GM12878 (cell line): ENCODE measurements at regions of chrX and their contacts with region 1.

Region 1: GRCh38 chrX:66015152-66015831 is 24.6 kb downstream of the VSIG4 start:
- DNase-seq: peak; percentile 68
- ATAC-seq: peak; percentile 40
- H3K4me3 ChIP-seq: peak overlapping the region; percentile 11; the same call in 1 of the 2 replicates
- H3K27ac ChIP-seq: peak overlapping the region; percentile 87
- H3K4me1 ChIP-seq: peaks cover 66% of the 10 kb centered on the region
- H3K27me3 ChIP-seq: no peaks in the 10 kb centered on the region
- CTCF ChIP-seq: no peak
- EP300 ChIP-seq: no peak
- POLR2A ChIP-seq: 0 out of 2 replicates have a peak, but pooled peaks have one; percentile 31
- RAD21 ChIP-seq: no peak

Region 2: DNA sequence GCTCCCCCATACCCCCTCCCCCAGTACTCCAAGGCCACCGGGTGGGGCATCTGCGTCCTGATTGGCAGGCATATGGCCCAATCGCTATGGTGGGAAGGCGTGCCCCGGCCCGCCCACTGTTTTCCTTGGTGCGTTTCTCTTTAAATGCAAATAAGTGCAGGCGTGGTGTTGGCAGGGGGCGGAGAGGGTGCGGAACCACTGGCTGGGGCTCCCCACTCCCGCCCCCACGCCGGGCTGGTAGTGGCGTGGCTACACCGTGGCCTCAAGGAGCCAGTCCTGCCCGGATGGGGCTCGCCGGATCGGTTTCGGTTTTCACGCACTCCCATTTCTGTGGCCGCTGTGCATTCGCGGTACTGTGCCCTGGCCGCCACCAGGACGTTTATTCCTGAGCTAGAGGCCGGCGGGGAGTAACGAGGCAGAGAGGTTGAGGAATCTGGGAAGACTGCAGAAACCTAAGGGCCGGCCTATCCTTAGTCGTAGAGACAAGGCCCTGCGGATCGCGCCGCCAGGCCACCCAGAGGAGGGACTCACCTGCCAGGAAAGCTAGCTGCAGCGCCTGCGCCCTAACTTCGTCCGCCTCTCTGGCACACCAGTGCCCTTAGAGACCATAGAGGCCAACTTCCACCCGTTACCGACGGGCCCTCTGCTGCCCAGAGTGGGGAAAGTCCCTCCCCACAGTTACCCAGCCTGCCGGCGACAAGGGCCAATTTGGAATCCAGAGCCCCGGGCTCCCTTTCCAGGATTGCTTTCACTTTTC is 1809.4 kb before region 1 on chrX:
- CTCF ChIA-PET with region 1: no interaction called
- POLR2A ChIA-PET with region 1: no interaction called
- RAD21 ChIA-PET with region 1: no interaction called
- SMC1A ChIA-PET with region 1: no interaction called
- in situ Hi-C with region 1: loop called (anchors 25 kb)
- intact Hi-C with region 1: no loop called
- DNase-seq: peak; percentile 71
- ATAC-seq: peak; percentile 89
- H3K4me3 ChIP-seq: peak overlapping the region; percentile 62
- H3K27ac ChIP-seq: peak overlapping the region; percentile 84
- H3K4me1 ChIP-seq: no peaks in the 10 kb centered on the region; the same call in 1 of the 2 replicates
- H3K27me3 ChIP-seq: no peaks in the 10 kb centered on the region
- CTCF ChIP-seq: no peak
- EP300 ChIP-seq: no peak
- POLR2A ChIP-seq: peak; percentile 92
- RAD21 ChIP-seq: no peak

Region 3: GRCh38 chrX:65783746-65784145 is 231.5 kb before region 1 on chrX:
- CTCF ChIA-PET with region 1: no interaction called
- POLR2A ChIA-PET with region 1: no interaction called
- RAD21 ChIA-PET with region 1: no interaction called
- SMC1A ChIA-PET with region 1: no interaction called
- in situ Hi-C with region 1: no loop called
- intact Hi-C with region 1: no loop called
- DNase-seq: no peak
- ATAC-seq: no peak
- H3K4me3 ChIP-seq: no peak overlapping the region
- H3K27ac ChIP-seq: no peak overlapping the region
- H3K4me1 ChIP-seq: no peaks in the 10 kb centered on the region
- H3K27me3 ChIP-seq: no peaks in the 10 kb centered on the region
- CTCF ChIP-seq: no peak
- EP300 ChIP-seq: no peak
- POLR2A ChIP-seq: no peak
- RAD21 ChIP-seq: no peak

Region 4: DNA sequence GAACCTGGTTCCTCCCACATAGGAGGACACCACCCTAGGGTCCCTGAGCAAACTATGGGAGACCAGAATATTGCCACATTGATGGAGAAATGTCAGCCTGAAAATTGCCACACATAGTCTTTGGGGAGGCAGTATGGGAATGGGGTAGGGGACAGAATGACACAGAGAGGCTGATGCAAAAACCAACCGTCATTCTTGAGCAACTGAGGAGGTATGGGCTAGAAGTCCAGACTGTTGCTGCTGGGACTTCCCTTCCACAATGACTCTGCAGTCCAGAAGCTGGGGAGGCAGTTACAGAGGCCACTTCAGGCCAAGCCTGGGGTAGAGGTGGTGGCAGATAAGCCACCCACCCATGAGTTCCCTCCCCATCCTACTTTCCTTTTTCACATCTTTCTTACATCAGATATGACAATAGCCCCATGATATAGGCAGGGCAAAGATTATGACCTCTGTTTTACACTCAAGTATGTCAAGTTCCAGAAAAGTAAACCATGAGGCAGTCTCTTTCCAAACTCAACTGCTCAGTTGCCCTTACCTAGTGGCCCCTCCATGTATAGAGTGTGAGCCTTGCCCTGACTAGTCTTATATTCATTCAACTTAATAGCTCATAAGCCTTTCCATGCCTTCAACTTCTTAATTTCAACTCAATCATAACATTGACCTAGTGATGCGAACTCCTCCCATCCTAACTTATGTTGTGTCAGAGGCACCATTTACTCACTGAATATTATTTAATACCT is 17.1 kb before region 1 on chrX:
- CTCF ChIA-PET with region 1: interaction called, 4 read pairs
- POLR2A ChIA-PET with region 1: interaction called, 4 read pairs
- RAD21 ChIA-PET with region 1: interaction called, 14 read pairs
- SMC1A ChIA-PET with region 1: interaction called, 12 read pairs
- in situ Hi-C with region 1: no loop called
- intact Hi-C with region 1: no loop called
- DNase-seq: no peak
- ATAC-seq: no peak
- H3K4me3 ChIP-seq: no peak overlapping the region
- H3K27ac ChIP-seq: no peak overlapping the region
- H3K4me1 ChIP-seq: peaks cover 4% of the 10 kb centered on the region
- H3K27me3 ChIP-seq: no peaks in the 10 kb centered on the region
- CTCF ChIP-seq: no peak
- EP300 ChIP-seq: no peak
- POLR2A ChIP-seq: no peak
- RAD21 ChIP-seq: no peak

Region 5: DNA sequence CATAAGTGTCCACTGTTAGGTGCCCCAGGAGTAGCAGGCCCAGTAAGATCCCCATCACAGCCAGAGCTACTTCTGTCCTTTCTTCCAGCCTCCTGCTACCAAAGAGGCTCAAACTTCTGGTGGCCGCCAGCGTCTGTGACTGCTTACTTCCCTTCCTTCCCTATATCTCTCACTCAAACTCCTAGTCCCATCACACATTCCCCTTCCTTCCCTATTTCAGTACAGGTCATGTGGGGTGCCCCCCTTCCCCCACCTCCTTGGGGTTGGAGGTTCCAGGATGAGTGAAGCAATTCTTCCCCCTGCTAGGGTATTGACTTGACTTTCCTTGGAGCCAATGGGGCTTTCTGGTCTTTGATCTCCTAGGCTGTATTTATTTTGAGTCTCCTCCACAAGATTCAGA is 24.7 kb after region 1 on chrX and contains the start of gene VSIG4:
- CTCF ChIA-PET with region 1: interaction called, 11 read pairs
- POLR2A ChIA-PET with region 1: interaction called, 18 read pairs
- RAD21 ChIA-PET with region 1: interaction called, 47 read pairs
- SMC1A ChIA-PET with region 1: interaction called, 85 read pairs
- in situ Hi-C with region 1: no loop called
- intact Hi-C with region 1: loop called (anchors 2 kb)
- DNase-seq: no peak
- ATAC-seq: no peak
- H3K4me3 ChIP-seq: no peak within 1 kb of the TSS
- H3K27ac ChIP-seq: no peak within 1 kb of the TSS
- H3K4me1 ChIP-seq: peaks cover 15% of the 10 kb centered on the region
- H3K27me3 ChIP-seq: no peaks in the 10 kb centered on the region
- CTCF ChIP-seq: no peak
- EP300 ChIP-seq: no peak
- POLR2A ChIP-seq: no peak
- RAD21 ChIP-seq: no peak
- polyA plus RNA-seq, gene VSIG4: not detected

Region 6: DNA sequence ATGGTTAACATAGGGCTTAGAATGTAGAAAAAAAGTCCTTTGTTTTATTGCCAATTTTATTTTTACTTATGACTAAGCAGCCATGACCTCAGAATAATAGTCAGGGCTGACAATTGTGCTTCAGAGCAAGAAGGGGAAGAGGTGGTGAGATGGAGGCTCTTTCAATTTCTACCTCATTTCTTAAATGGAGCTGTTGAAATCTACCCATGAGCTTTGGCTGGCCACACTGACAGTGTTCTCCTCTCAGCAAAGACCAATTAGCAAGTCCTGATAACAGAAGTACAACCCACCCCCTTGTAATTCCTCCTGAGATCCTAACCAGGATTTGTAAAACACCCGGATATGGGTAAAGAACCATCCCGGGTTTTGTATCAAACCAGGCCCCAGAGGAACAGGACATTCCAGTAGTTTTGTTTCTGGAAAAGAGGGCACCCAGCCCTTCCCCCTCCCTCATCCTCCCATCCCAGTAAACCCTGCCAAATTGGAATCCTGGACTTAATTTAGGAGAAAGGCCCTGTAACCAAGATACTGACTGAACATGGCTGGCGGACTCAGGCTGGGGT is 148.6 kb after region 1 on chrX and contains the start of gene HEPH:
- CTCF ChIA-PET with region 1: interaction called, 3 read pairs
- POLR2A ChIA-PET with region 1: no interaction called
- RAD21 ChIA-PET with region 1: interaction called, 6 read pairs
- SMC1A ChIA-PET with region 1: interaction called, 4 read pairs
- in situ Hi-C with region 1: no loop called
- intact Hi-C with region 1: loop called (anchors 5 kb)
- DNase-seq: peak; percentile 12
- ATAC-seq: peak; percentile 86
- H3K4me3 ChIP-seq: no peak within 1 kb of the TSS
- H3K27ac ChIP-seq: no peak within 1 kb of the TSS
- H3K4me1 ChIP-seq: no peaks in the 10 kb centered on the region; the same call in 1 of the 2 replicates
- H3K27me3 ChIP-seq: no peaks in the 10 kb centered on the region
- CTCF ChIP-seq: no peak
- EP300 ChIP-seq: 0 out of 4 replicates have a peak, but pooled peaks of 1 of the 2 experiments have one; percentile 7
- POLR2A ChIP-seq: no peak
- RAD21 ChIP-seq: no peak
- polyA plus RNA-seq, gene HEPH: 0.20 to 0.56 TPM

Region 7: GRCh38 chrX:66728818-66729271 is 713.6 kb after region 1 on chrX:
- CTCF ChIA-PET with region 1: interaction called, 18 read pairs
- POLR2A ChIA-PET with region 1: no interaction called
- RAD21 ChIA-PET with region 1: interaction called, 4 read pairs
- SMC1A ChIA-PET with region 1: interaction called, 3 read pairs
- in situ Hi-C with region 1: no loop called
- intact Hi-C with region 1: loop called (anchors 10 kb)
- DNase-seq: no peak
- ATAC-seq: peak; percentile 69
- H3K4me3 ChIP-seq: no peak overlapping the region
- H3K27ac ChIP-seq: no peak overlapping the region
- H3K4me1 ChIP-seq: no peaks in the 10 kb centered on the region
- H3K27me3 ChIP-seq: no peaks in the 10 kb centered on the region
- CTCF ChIP-seq: peak; percentile 42 to 59 (median 55); a peak in 5 of 6 replicates
- EP300 ChIP-seq: no peak
- POLR2A ChIP-seq: no peak
- RAD21 ChIP-seq: peak; percentile 58